ENCODE measurements at regions of chr3 and their contacts with region 1.

Region 1: DNA sequence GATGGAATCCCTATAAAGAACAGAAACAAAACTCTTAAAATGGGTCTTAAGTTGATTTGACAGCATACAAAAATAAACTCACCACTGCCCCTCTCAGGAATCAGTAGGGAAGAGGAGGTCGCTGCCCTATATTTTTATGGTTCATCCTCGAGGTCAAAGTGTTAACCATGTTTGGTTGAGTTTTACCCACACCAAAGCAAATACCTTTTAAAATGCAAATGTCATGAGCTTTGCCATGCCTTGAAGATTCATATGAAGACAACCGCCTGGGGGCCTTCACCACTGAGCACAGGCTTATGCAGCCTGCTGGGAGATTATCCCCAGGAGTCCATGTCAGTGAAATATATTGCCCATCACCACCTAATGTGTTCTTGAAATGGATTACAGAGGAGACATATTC is 66.1 kb downstream of the GLB1 start:
- DNase-seq: peak; percentile 81
- ATAC-seq: peak; percentile 83
- H3K4me3 Mint-ChIP-seq: no peak overlapping the region
- H3K27ac Mint-ChIP-seq: peak overlapping the region; percentile 70
- H3K4me1 Mint-ChIP-seq: peaks cover 29% of the 10 kb centered on the region
- H3K27me3 Mint-ChIP-seq: no peaks in the 10 kb centered on the region

Region 2: DNA sequence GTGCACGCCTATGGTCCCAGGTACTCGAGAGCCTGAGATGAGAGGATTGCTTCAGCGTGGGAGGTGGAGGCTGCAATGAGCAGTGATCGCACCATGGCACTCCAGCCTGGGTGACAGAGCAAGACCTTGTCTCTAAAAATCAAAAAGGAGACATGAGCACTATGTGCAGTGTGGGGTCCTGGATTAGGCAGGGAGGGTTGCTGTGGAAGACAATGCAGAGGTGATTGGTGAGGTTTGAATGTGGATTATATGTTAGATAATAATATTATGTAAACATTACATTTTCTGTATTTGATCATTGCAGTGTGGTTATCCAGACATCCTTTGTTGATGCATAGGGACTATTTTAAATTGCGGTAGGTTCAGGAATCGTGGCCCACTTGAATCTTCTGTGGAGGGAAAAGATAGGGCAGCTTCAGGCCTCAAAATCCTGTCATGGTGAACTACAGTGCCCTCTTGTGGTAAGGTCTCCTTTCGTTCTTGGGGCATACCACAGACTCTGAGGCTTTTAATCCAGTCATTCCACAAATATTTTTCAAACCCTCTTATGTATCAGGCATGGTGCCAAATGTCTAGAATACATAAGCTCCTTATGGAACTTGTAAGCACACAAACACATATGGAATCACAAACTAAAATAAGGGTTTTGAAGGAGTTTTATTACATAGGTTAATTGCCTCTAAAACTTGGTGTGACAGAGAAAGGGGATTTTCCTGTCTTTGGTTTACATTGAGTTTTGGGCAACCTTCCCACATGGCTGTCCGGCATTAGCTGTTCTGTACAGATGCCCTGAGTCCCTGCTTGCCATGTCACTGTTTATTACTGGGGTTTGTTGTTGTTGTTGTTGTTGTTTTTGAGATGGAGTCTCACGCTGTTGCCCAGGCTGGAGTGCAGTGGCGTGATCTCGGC is 886.7 kb before region 1 on chr3:
- CTCF ChIA-PET with region 1: no interaction called
- DNase-seq: peak; percentile 61
- ATAC-seq: peak; percentile 63
- H3K4me3 Mint-ChIP-seq: no peak overlapping the region
- H3K27ac Mint-ChIP-seq: no peak overlapping the region
- H3K4me1 Mint-ChIP-seq: peaks cover 15% of the 10 kb centered on the region
- H3K27me3 Mint-ChIP-seq: no peaks in the 10 kb centered on the region

Region 3: DNA sequence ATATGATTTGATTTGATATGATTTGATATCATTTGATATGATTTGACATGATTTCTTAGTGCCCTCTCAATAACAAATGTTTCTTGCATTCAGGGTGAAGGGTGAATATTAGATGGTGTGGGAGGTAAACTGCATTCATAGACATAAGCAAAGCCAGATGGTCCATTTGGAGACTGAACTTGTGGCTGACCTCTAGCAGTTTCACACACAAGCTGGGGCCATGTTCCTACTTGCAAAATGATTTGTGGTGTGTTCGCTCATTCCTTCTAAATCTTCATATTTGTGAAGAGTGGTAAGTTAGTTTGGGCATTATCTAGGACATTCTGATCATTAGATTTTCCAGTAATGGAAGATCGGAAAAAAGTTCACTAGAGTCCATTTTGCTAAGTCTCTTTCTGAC is 119.8 kb before region 1 on chr3:
- CTCF ChIA-PET with region 1: no interaction called
- DNase-seq: no peak
- ATAC-seq: no peak
- H3K4me3 Mint-ChIP-seq: no peak overlapping the region
- H3K27ac Mint-ChIP-seq: no peak overlapping the region
- H3K4me1 Mint-ChIP-seq: peaks cover 3% of the 10 kb centered on the region
- H3K27me3 Mint-ChIP-seq: peaks cover 3% of the 10 kb centered on the region

Region 4: GRCh38 chr3:33047842-33048834 is 17.3 kb after region 1 on chr3:
- CTCF ChIA-PET with region 1: interaction called, 96 read pairs
- DNase-seq: peak; percentile 79
- ATAC-seq: peak; percentile 77
- H3K4me3 Mint-ChIP-seq: peak overlapping the region; percentile 29
- H3K27ac Mint-ChIP-seq: peak overlapping the region; percentile 97
- H3K4me1 Mint-ChIP-seq: peaks cover 79% of the 10 kb centered on the region
- H3K27me3 Mint-ChIP-seq: no peaks in the 10 kb centered on the region

Region 5: DNA sequence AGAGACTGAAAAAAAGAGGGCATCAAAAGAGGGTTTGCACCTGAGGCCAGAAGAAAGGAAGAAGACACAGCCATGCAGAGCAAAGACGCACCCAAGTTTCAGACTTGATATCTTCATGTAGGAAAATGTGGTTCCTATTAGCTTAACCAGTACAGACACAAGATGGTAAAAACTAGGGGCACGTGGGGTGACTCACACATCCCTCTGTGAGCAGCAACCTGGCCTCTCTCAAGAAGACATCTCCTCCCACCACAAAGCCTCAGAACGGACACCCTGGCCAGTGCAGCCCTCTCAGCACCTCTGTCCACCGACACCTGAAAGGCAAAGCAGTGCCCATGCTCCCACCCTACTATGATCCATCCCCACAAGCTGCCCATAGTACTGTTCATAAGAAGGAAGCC is 32.8 kb after region 1 on chr3:
- CTCF ChIA-PET with region 1: interaction called, 28 read pairs
- DNase-seq: peak; percentile 82
- ATAC-seq: peak; percentile 68
- H3K4me3 Mint-ChIP-seq: peak overlapping the region; percentile 29
- H3K27ac Mint-ChIP-seq: peak overlapping the region; percentile 84
- H3K4me1 Mint-ChIP-seq: peaks cover 70% of the 10 kb centered on the region
- H3K27me3 Mint-ChIP-seq: no peaks in the 10 kb centered on the region

Region 6: DNA sequence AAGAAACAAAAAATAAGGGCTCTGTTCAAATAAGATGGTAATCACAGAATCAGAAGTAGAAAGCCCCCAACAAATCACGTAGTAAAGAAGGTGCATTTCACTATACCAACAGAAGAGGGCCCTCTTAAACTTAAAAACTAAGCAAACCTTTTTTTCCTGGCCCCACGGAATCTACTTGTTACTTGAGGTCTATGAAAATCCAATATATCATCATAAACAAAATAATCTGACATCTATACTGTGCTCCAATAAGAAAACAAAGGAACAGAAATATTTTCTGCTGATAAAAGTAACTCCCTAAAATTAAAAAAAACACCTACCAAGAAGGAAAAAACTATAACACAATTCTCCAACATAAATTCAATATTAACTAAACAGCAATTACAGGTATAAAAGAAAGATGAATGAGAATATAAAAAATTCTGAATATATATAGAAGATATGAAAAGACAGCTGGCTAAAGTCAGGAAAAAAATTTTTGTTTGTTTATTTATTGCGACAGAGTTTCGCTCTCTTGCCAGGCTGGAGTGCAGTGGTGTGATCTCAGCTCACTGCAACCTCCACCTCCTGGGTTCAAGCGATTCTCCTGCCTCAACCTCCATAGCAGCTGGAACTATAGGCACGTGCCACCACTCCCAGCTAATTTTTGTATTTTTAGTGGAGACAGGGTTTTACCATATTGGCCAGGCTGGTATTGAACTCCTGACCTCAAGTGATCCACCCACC is 605.5 kb after region 1 on chr3:
- CTCF ChIA-PET with region 1: no interaction called
- DNase-seq: no peak
- ATAC-seq: no peak
- H3K4me3 Mint-ChIP-seq: no peak overlapping the region
- H3K27ac Mint-ChIP-seq: no peak overlapping the region
- H3K4me1 Mint-ChIP-seq: peaks cover 6% of the 10 kb centered on the region
- H3K27me3 Mint-ChIP-seq: no peaks in the 10 kb centered on the region

Measured in activated CD8-positive, alpha-beta memory T cell treated with anti-CD3 and anti-CD28 coated beads, Interleukin-2, amount 10 ng/mL, durations not matched to agents 7 days and 5 days (primary cell).